ENCODE measurements at regions of chr2 and their contacts with region 1.

Region 1: GRCh38 chr2:176638167-176639015 is 369.1 kb downstream of the MTX2 start:
- DNase-seq: peak; percentile 86
- H3K4me3 ChIP-seq: peak overlapping the region; percentile 52 to 74 (median 65)
- H3K27ac ChIP-seq: peak overlapping the region; percentile 65 to 80 (median 72)
- H3K4me1 ChIP-seq: peaks cover 0 to 11% (median 3%) of the 10 kb centered on the region in 4 donors
- H3K27me3 ChIP-seq: peaks cover 0 to 55% (median 11%) of the 10 kb centered on the region in 3 donors
- CTCF ChIP-seq: peak in 3 of 4 experiments; percentile 13 to 77 (median 33)
- EP300 ChIP-seq: no peak
- POLR2A ChIP-seq: no peak

Region 2: GRCh38 chr2:176128982-176129826 is 509.2 kb before region 1 on chr2 and contains the start of gene HOXD8:
- intact Hi-C with region 1: loop called (anchors 2 kb)
- DNase-seq: peak; percentile 89
- H3K4me3 ChIP-seq: peak within 1 kb of the TSS; percentile 37 to 69 (median 50)
- H3K27ac ChIP-seq: peak within 1 kb of the TSS; percentile 72 to 93 (median 87)
- H3K4me1 ChIP-seq: peaks cover 0 to 49% (median 33%) of the 10 kb centered on the region in 4 donors
- H3K27me3 ChIP-seq: peaks cover 11 to 69% (median 65%) of the 10 kb centered on the region in 3 donors
- CTCF ChIP-seq: no peak
- EP300 ChIP-seq: no peak
- POLR2A ChIP-seq: no peak
- total RNA-seq, gene HOXD8: 10.2 to 19.7 (median 16.5) TPM

Region 3: DNA sequence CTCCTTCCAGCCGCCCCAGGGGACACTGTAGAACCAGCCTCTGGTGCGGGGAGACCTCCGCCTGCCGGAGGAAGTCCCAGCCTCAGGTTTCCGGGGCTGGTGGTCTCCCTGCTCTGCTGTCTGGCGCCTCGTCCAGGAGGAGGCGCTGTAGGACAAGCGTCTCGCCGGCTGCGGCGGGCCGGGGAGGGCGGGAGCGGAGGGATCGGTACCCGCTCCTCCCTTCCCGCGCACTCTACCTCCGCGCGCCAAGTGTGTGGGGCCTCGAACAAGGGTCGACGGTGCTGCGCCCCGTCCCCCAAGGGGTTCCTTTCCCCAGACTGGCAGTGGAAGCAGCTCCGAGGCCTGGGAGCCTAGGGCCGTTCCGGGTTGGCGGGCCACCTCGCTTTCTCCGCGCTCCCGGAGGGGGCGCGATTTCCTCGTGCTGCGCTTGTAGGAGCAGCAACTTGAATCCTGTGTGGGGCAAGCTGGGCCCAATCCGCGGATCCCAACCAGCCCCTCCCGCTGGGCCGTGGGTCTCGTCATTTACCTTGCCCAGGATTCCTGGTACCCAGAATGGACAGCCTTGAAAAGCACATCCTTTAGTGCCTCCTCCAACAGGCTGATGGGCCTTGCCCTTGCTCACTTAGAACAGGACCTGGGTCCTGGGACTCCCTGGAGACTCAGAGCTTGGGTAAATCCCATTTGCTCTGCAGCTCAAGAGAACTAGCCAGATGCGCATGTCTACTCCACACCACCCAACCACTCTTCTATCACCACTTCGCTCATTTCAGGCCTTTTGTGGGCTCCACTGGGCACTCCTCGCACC is 497.7 kb before region 1 on chr2:
- intact Hi-C with region 1: loop called (anchors 1 kb)
- DNase-seq: peak; percentile 87
- H3K4me3 ChIP-seq: peak overlapping the region; percentile 39 to 52 (median 50)
- H3K27ac ChIP-seq: peak overlapping the region; percentile 49 to 87 (median 54)
- H3K4me1 ChIP-seq: peaks cover 0 to 30% (median 24%) of the 10 kb centered on the region in 4 donors
- H3K27me3 ChIP-seq: peaks cover 3 to 69% (median 51%) of the 10 kb centered on the region in 3 donors
- CTCF ChIP-seq: peak; percentile 87 to 96 (median 95)
- EP300 ChIP-seq: no peak
- POLR2A ChIP-seq: no peak

Region 4: GRCh38 chr2:176234156-176234555 is 404.2 kb before region 1 on chr2:
- intact Hi-C with region 1: no loop called
- DNase-seq: no peak
- H3K4me3 ChIP-seq: no peak overlapping the region
- H3K27ac ChIP-seq: no peak overlapping the region
- H3K4me1 ChIP-seq: no peaks in the 10 kb centered on the region
- H3K27me3 ChIP-seq: no peaks in the 10 kb centered on the region
- CTCF ChIP-seq: no peak
- EP300 ChIP-seq: no peak
- POLR2A ChIP-seq: no peak

Region 5: GRCh38 chr2:176269319-176270099 is 368.9 kb before region 1 on chr2 and contains the start of gene MTX2:
- intact Hi-C with region 1: loop called (anchors 5 kb)
- DNase-seq: peak; percentile 80
- H3K4me3 ChIP-seq: peak within 1 kb of the TSS; percentile 62 to 80 (median 69)
- H3K27ac ChIP-seq: peak within 1 kb of the TSS; percentile 80 to 90 (median 82)
- H3K4me1 ChIP-seq: peaks cover 0 to 13% (median 9%) of the 10 kb centered on the region in 4 donors
- H3K27me3 ChIP-seq: no peaks in the 10 kb centered on the region
- CTCF ChIP-seq: peak in 2 of 4 experiments; percentile 18 to 26
- EP300 ChIP-seq: no peak
- POLR2A ChIP-seq: peak; percentile 17 to 44
- total RNA-seq, gene MTX2: 34.5 to 49.5 (median 38.8) TPM

Region 6: GRCh38 chr2:176454893-176455811 is 183.2 kb before region 1 on chr2:
- intact Hi-C with region 1: loop called (anchors 2 kb)
- DNase-seq: peak; percentile 92
- H3K4me3 ChIP-seq: no peak overlapping the region
- H3K27ac ChIP-seq: peak overlapping the region; percentile 36 to 59 (median 53)
- H3K4me1 ChIP-seq: peaks cover 0 to 12% (median 0%) of the 10 kb centered on the region in 4 donors
- H3K27me3 ChIP-seq: no peaks in the 10 kb centered on the region
- CTCF ChIP-seq: peak; percentile 48 to 93 (median 82)
- EP300 ChIP-seq: no peak
- POLR2A ChIP-seq: no peak

Region 7: DNA sequence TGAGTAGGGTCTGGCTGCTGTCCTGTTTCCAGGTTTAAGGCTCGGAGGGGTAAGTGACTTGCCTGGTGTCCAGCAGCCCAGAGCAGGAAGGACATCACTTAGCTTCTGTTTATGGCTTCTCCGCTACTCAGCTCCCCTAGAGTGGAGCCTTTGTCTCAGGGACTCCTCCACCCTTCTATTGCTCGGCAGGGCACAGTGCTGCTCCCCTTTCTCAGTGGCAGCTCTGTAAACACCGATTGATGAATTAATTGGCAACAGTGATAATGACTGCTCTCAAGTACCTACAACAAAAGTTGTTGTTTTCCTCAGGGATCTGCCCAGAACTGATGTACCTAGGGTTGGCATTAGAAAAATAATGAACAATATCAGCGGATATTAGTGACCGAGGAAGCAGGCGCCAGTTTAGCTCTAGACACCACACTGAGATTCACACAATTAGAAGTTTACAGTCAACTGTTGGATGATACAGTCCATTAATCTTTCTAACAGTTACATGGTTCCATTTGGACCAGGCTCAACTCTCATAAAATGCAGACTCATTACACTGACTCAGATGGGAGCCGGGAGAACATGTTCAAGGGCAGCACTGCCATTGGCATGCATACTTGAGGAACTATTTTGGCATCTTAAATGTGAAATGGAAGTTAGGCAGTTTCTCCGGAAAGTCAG is 103.5 kb before region 1 on chr2:
- intact Hi-C with region 1: no loop called
- DNase-seq: no peak
- H3K4me3 ChIP-seq: no peak overlapping the region
- H3K27ac ChIP-seq: no peak overlapping the region
- H3K4me1 ChIP-seq: peaks cover 0 to 12% (median 8%) of the 10 kb centered on the region in 4 donors
- H3K27me3 ChIP-seq: no peaks in the 10 kb centered on the region
- CTCF ChIP-seq: no peak
- EP300 ChIP-seq: no peak
- POLR2A ChIP-seq: no peak

Region 8: DNA sequence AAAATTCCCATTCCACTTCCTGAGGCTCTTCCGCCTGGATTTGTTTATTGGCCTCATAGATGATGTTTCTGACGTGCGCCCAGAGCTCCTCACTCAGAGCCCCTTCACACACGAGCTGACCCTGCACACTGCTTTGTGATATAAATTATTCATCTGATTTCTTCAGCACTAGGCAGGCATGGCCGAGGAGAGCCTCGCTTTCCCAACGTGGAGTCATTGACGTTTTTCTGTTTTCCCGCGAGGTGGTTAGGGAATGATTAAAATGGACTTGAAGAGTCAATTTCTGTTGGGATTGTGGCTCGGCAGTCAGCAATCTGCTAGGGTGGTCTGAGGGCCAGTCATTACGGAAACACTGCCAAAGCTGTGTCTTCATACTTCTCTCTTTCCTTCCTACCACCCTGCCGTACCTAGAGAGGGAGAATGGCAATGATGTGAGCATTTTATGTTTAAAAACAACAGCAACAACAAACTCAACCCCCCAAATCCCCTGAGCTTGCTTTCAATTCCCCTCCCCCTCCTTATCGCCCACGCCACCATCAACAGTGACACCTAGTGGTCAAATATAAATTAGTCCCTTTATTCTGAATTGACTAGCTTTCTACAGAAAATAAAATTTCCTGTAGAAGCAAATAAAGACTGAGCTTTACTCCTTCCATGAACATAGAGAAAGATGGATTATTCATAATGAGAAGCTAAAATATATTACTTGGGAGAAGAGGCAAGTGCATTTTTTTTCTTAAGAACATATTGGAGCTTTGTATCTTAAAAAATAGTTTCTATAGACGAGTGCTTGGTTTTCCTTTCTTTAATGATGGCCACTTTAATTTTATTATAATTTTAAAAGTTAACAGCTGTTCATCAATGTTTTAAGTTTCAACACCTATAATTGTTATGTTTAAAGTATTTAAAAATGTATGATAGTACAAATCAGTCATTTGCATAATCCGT is 84.0 kb before region 1 on chr2:
- intact Hi-C with region 1: loop called (anchors 2 kb)
- DNase-seq: peak; percentile 68
- H3K4me3 ChIP-seq: peak overlapping the region; percentile 29 to 49 (median 38)
- H3K27ac ChIP-seq: peak overlapping the region; percentile 50 to 72 (median 67)
- H3K4me1 ChIP-seq: peaks cover 0 to 26% (median 19%) of the 10 kb centered on the region in 4 donors
- H3K27me3 ChIP-seq: no peaks in the 10 kb centered on the region
- CTCF ChIP-seq: peak; percentile 77 to 87 (median 82)
- EP300 ChIP-seq: no peak
- POLR2A ChIP-seq: no peak

Measured in sigmoid colon (tissue), 7 donors.